Natural killer cell (primary cell): ENCODE measurements at regions of chr6 and their contacts with region 1.

Region 1: GRCh38 chr6:53544470-53545308 is at the start of gene GCLC:
- DNase-seq: peak; percentile 86 to 94
- ATAC-seq: peak; percentile 64 to 77 (median 70)
- H3K4me3 ChIP-seq: peak within 1 kb of the TSS; percentile 68
- H3K4me3 Mint-ChIP-seq: peak within 1 kb of the TSS; percentile 98
- H3K27ac ChIP-seq: peak within 1 kb of the TSS; percentile 53
- H3K27ac Mint-ChIP-seq: peak within 1 kb of the TSS; percentile 91 to 92
- H3K4me1 ChIP-seq: peaks cover 23% of the 10 kb centered on the region
- H3K4me1 Mint-ChIP-seq: peaks cover 51 to 73% of the 10 kb centered on the region in 2 donors
- H3K27me3 ChIP-seq: no peaks in the 10 kb centered on the region
- H3K27me3 Mint-ChIP-seq: no peaks in the 10 kb centered on the region
- CTCF ChIP-seq: peak; percentile 73
- total RNA-seq, gene GCLC: 39.0 to 52.7 (median 39.2) TPM

Region 2: GRCh38 chr6:52577022-52577777 is 967.5 kb before region 1 on chr6 and contains the start of gene TRAM2:
- intact Hi-C with region 1: loop called (anchors 5 kb)
- DNase-seq: peak; percentile 74 to 89
- ATAC-seq: peak; percentile 70 to 87 (median 77)
- H3K4me3 ChIP-seq: peak within 1 kb of the TSS; percentile 65
- H3K4me3 Mint-ChIP-seq: peak within 1 kb of the TSS; percentile 89
- H3K27ac ChIP-seq: peak within 1 kb of the TSS; percentile 65
- H3K27ac Mint-ChIP-seq: peak within 1 kb of the TSS; percentile 87 to 91
- H3K4me1 ChIP-seq: peaks cover 40% of the 10 kb centered on the region
- H3K4me1 Mint-ChIP-seq: peaks cover 43 to 45% of the 10 kb centered on the region in 2 donors
- H3K27me3 ChIP-seq: no peaks in the 10 kb centered on the region
- H3K27me3 Mint-ChIP-seq: no peaks in the 10 kb centered on the region
- CTCF ChIP-seq: no peak
- total RNA-seq, gene TRAM2: 16.2 to 20.0 (median 19.2) TPM

Region 3: GRCh38 chr6:53064726-53065215 is 479.9 kb before region 1 on chr6:
- intact Hi-C with region 1: loop called (anchors 2 kb)
- DNase-seq: peak; percentile 89 to 98
- ATAC-seq: peak; percentile 83 to 95 (median 86)
- H3K4me3 ChIP-seq: peak overlapping the region; percentile 72
- H3K4me3 Mint-ChIP-seq: peak overlapping the region; percentile 98
- H3K27ac ChIP-seq: peak overlapping the region; percentile 73
- H3K27ac Mint-ChIP-seq: peak overlapping the region; percentile 93 to 94
- H3K4me1 ChIP-seq: peaks cover 22% of the 10 kb centered on the region
- H3K4me1 Mint-ChIP-seq: peaks cover 44 to 54% of the 10 kb centered on the region in 2 donors
- H3K27me3 ChIP-seq: no peaks in the 10 kb centered on the region
- H3K27me3 Mint-ChIP-seq: no peaks in the 10 kb centered on the region
- CTCF ChIP-seq: no peak

Region 4: DNA sequence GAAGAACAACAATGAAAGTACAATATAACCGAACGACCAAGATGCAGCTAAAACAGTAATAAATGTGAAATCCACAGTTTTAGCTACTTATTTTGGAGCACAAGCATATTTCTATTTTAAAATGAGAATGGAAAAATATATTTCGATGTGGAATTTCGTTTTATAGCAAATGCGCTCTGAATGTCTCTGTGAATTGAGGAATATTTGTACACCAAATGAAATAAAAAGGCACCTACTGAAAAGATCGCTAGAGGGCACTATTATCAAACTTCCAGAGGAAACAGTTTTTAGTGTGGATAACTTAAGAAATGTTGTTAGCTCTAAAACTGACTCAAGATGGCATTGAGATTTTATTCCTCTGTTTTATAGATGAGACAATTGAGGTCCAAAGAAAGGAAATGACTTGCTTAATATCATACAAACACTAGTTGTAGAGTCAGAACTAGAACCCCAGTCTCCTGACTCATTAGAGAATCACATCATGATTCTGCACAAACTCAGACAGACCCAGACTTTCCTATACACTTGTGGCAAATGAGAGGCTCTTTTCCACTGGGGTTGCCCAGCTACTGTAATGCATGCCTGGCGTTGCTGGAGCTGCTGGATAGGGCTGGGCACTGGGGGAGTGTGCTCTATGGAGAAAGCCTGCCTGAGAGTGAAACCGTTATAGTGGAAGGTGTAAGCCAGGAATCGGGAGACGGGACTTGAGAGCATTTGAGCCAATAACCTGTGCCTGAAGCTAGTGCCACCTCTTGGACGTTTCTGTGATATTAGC is 51.6 kb before region 1 on chr6:
- intact Hi-C with region 1: loop called (anchors 5 kb)
- DNase-seq: peak in 1 of 2 donors; percentile 70
- ATAC-seq: peak; percentile 14 to 69 (median 57)
- H3K4me3 ChIP-seq: no peak overlapping the region
- H3K4me3 Mint-ChIP-seq: no peak overlapping the region
- H3K27ac ChIP-seq: no peak overlapping the region
- H3K27ac Mint-ChIP-seq: no peak overlapping the region
- H3K4me1 ChIP-seq: peaks cover 3% of the 10 kb centered on the region
- H3K4me1 Mint-ChIP-seq: peaks cover 0 to 6% of the 10 kb centered on the region in 2 donors
- H3K27me3 ChIP-seq: no peaks in the 10 kb centered on the region
- H3K27me3 Mint-ChIP-seq: peaks cover 9 to 31% of the 10 kb centered on the region in 2 donors
- CTCF ChIP-seq: peak; percentile 84

Region 5: GRCh38 chr6:53651764-53652401 is 107.2 kb after region 1 on chr6:
- intact Hi-C with region 1: loop called (anchors 1 kb)
- DNase-seq: peak; percentile 72 to 90
- ATAC-seq: peak; percentile 85 to 90 (median 86)
- H3K4me3 ChIP-seq: peak overlapping the region; percentile 56
- H3K4me3 Mint-ChIP-seq: peak overlapping the region; percentile 96
- H3K27ac ChIP-seq: peak overlapping the region; percentile 20
- H3K27ac Mint-ChIP-seq: peak overlapping the region; percentile 85 to 93
- H3K4me1 ChIP-seq: peaks cover 11% of the 10 kb centered on the region
- H3K4me1 Mint-ChIP-seq: peaks cover 32 to 36% of the 10 kb centered on the region in 2 donors
- H3K27me3 ChIP-seq: no peaks in the 10 kb centered on the region
- H3K27me3 Mint-ChIP-seq: peaks cover 0 to 3% of the 10 kb centered on the region in 2 donors
- CTCF ChIP-seq: no peak

Region 6: DNA sequence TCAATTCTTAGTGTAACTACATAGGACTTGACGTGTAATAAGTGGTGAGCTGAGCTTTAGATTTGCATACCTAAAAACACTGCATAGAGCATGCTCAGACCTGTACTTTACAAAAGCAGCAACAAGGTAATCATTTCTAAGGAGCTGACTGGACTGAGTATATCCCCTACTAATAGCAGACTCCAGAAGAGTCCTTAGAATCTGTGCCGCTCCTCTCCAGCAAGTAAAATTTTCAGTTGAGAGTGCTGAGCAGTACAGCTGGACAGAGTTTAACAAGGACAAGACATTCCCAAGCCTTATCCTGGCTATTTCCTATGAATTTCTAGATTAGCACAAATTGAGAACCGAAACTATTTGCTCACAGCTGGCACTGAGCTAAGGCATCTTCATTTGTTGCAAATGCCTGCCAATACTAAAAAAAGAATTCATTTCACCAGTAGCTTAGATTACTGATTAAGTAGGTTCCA is 147.0 kb after region 1 on chr6:
- intact Hi-C with region 1: no loop called
- DNase-seq: no peak
- ATAC-seq: no peak
- H3K4me3 ChIP-seq: no peak overlapping the region
- H3K4me3 Mint-ChIP-seq: no peak overlapping the region
- H3K27ac ChIP-seq: no peak overlapping the region
- H3K27ac Mint-ChIP-seq: no peak overlapping the region
- H3K4me1 ChIP-seq: no peaks in the 10 kb centered on the region
- H3K4me1 Mint-ChIP-seq: no peaks in the 10 kb centered on the region
- H3K27me3 ChIP-seq: no peaks in the 10 kb centered on the region
- H3K27me3 Mint-ChIP-seq: peaks cover 11 to 12% of the 10 kb centered on the region in 2 donors
- CTCF ChIP-seq: no peak

Region 7: GRCh38 chr6:53794720-53795253 is 250.1 kb after region 1 on chr6 and contains the start of gene LRRC1:
- intact Hi-C with region 1: loop called (anchors 10 kb)
- DNase-seq: peak; percentile 77 to 90
- ATAC-seq: peak; percentile 77 to 81 (median 78)
- H3K4me3 ChIP-seq: peak within 1 kb of the TSS; percentile 95
- H3K4me3 Mint-ChIP-seq: peak within 1 kb of the TSS; percentile 96
- H3K27ac ChIP-seq: peak within 1 kb of the TSS; percentile 63
- H3K27ac Mint-ChIP-seq: peak within 1 kb of the TSS; percentile 73 to 84
- H3K4me1 ChIP-seq: peaks cover 26% of the 10 kb centered on the region
- H3K4me1 Mint-ChIP-seq: peaks cover 28 to 39% of the 10 kb centered on the region in 2 donors
- H3K27me3 ChIP-seq: peaks cover 4% of the 10 kb centered on the region
- H3K27me3 Mint-ChIP-seq: peaks cover 27 to 30% of the 10 kb centered on the region in 2 donors
- CTCF ChIP-seq: no peak
- total RNA-seq, gene LRRC1: 2.0 to 5.6 (median 3.7) TPM

Region 8: DNA sequence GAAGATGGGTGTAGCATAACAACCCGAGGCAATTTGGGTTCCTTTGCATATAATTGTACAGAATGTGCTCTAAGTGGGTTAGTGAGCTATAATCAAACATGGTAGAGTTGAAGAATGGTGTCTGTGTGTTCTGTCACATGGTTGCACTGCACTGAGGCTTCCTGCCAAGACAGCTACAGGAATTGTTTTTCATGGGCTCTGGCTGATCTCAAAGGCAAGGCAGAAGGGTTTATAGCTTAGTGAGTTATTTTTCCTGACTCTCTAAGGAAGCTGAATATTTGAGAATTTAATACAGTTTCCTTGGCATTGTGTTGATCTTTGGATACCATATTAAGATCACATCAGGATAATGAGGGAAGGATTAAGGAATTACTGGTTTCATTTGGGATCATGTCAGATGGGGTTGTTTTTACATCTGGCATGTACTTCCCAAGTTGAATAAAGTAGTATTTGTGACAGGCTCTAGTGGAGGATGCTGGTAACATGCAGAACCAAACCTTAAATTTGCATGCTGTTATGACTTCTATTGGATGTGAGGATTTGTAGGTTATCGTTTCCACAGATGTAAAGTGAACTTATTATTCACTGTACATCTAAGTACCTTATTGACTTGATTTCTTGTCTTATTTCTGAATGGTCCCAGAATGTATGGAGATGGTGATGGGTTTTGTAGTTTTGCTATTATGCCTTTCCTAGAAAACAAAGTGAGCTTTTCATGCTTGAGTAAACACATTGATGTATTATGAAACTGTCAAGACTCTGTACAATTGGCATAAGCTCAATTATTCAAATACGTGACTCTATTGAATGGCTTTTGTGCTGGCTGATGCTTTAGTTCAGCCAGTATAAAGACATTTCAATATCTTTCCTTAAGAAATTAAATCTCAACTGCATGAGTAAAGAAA is 293.4 kb after region 1 on chr6:
- intact Hi-C with region 1: no loop called
- DNase-seq: no peak
- ATAC-seq: no peak
- H3K4me3 ChIP-seq: no peak overlapping the region
- H3K4me3 Mint-ChIP-seq: no peak overlapping the region
- H3K27ac ChIP-seq: no peak overlapping the region
- H3K27ac Mint-ChIP-seq: no peak overlapping the region
- H3K4me1 ChIP-seq: no peaks in the 10 kb centered on the region
- H3K4me1 Mint-ChIP-seq: peaks cover 0 to 9% of the 10 kb centered on the region in 2 donors
- H3K27me3 ChIP-seq: no peaks in the 10 kb centered on the region
- H3K27me3 Mint-ChIP-seq: no peaks in the 10 kb centered on the region
- CTCF ChIP-seq: no peak